Dorsolateral prefrontal cortex (tissue), 120 donors: ENCODE measurements at regions of chr19 and their contacts with region 1.

Region 1: DNA sequence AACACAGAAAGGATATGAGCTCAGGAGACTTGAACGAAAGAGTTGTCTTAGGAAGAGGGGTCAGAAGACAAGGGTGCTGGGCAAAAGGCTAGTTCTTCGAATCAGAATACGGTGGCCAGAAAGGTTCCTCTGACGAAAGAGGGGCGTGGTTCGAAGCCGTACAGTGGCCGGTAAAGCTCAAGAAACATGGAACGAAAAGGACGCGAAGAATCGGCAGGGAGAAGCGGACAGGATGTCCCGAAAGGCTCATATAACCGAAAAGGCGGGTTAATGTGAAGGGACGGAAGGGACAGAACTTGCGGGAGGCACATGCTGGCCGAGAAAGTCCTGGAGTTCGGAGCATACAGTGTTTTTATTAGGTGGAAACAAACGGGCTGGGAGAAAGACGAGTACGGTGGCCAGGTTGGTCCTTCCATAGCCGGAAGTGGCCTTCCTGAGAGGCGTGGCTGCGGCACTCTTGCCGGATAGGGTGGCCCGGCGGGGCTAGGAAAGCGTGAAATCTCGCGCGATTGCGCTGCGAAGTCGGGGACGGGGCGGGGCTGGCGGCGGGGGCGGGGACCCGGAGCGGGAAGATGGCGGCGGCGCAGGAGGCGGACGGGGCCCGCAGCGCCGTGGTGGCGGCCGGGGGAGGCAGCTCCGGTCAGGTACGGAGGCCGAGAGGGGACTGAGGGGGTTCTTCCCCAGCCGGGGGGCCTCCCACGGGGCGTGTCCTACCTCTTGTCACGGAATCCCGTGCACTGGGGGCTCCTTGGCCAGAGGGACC is at the start of gene CLPTM1:
- DNase-seq: peak; percentile 91 to 98 (median 95)
- H3K4me3 ChIP-seq: peak within 1 kb of the TSS; percentile 77 to 100 (median 98)
- H3K27ac ChIP-seq: peak within 1 kb of the TSS; percentile 88 to 100 (median 97)
- H3K27me3 ChIP-seq: no peaks in the 10 kb centered on the region
- CTCF ChIP-seq: peak in 13 of 56 donors; percentile 2 to 40 (median 17)
- total RNA-seq, gene CLPTM1: 131 to 199 (median 164) TPM

Region 2: GRCh38 chr19:44890366-44891015 is 64.5 kb before region 1 on chr19:
- intact Hi-C with region 1: loop called in 1 of 2 experiments (anchors 2 kb)
- DNase-seq: peak in 7 of 10 donors; percentile 99 to 100 (median 100)
- H3K4me3 ChIP-seq: peak overlapping the region; percentile 51 to 99 (median 74)
- H3K27ac ChIP-seq: peak overlapping the region; percentile 58 to 99 (median 93)
- H3K27me3 ChIP-seq: no peaks in the 10 kb centered on the region
- CTCF ChIP-seq: peak in 20 of 56 donors; percentile 7 to 42 (median 24)

Region 3: GRCh38 chr19:44903602-44904425 is 51.2 kb before region 1 on chr19:
- intact Hi-C with region 1: loop called in 1 of 2 experiments (anchors 2 kb)
- DNase-seq: peak; percentile 58 to 89 (median 78)
- H3K4me3 ChIP-seq: peak overlapping the region in 7 of 59 donors; percentile 2 to 33 (median 23)
- H3K27ac ChIP-seq: peak overlapping the region in 33 of 59 donors; percentile 8 to 78 (median 52)
- H3K27me3 ChIP-seq: peaks cover 0 to 25% (median 6%) of the 10 kb centered on the region in 45 donors
- CTCF ChIP-seq: peak; percentile 93 to 100 (median 98)

Region 4: DNA sequence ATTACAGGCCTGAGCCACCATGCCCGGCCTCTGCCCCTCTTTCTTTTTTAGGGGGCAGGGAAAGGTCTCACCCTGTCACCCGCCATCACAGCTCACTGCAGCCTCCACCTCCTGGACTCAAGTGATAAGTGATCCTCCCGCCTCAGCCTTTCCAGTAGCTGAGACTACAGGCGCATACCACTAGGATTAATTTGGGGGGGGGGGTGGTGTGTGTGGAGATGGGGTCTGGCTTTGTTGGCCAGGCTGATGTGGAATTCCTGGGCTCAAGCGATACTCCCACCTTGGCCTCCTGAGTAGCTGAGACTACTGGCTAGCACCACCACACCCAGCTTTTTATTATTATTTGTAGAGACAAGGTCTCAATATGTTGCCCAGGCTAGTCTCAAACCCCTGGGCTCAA is 45.2 kb before region 1 on chr19:
- intact Hi-C with region 1: loop called (anchors 2 kb)
- DNase-seq: no peak
- H3K4me3 ChIP-seq: no peak overlapping the region
- H3K27ac ChIP-seq: peak overlapping the region in 3 of 59 donors; percentile 34 to 45 (median 44)
- H3K27me3 ChIP-seq: peaks cover 0 to 25% (median 6%) of the 10 kb centered on the region in 45 donors
- CTCF ChIP-seq: no peak

Region 5: DNA sequence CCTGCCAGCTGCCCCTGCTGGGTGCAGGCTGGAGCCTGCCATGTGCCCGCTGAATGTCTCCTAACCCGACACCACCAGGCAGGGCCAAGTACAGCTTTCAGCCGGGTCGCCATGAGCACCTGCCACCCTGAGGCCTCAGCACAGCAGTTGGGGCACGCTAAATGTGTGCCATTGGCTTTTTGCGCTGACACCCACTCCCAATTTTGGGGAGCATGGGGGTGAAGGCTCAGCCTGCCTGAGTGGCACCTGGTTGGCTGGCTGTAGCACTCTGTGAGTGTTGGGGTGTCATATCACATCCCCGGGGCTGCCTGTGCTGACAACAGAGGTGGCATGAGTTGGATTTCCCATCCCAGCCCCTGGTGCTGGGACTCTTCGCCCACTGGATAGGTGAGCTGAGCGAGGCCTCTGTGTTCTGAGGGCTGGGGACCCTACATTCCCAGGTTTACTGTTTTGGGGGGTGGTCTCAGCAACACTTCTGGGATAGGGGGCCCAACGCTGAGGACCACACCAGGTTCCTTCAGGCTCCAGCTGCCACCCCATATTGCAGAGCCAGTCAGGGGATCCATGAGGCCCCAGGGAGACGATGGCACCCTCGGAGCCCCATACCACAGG is 39.0 kb after region 1 on chr19:
- intact Hi-C with region 1: loop called (anchors 2 kb)
- DNase-seq: no peak
- H3K4me3 ChIP-seq: no peak overlapping the region
- H3K27ac ChIP-seq: no peak overlapping the region
- H3K27me3 ChIP-seq: no peaks in the 10 kb centered on the region
- CTCF ChIP-seq: no peak

Region 6: DNA sequence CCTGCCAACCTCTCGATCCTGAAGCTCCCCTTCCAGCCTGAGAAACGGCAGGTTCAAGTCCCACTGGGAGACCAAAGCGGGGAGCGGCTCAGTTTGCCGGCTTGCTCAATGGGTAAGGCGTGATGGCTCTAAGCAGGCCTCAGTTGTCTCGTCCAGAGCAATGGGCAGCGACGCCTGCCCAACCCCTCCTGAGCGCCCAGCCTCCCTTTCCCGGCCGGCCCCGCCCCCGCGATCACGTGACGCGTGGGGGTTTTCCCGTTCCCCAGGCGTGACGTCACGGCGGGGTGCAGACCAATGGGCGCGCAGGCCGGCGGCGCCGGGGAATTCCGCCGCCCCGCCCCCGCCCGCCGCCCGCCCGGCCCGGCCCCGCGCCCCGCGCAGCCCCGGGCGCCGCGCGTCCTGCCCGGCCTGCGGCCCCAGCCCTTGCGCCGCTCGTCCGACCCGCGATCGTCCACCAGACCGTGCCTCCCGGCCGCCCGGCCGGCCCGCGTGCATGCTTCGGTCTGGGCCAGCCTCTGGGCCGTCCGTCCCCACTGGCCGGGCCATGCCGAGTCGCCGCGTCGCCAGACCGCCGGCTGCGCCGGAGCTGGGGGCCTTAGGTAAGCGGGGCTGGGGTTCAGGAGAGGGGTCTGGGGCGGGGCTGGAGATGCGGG is 46.2 kb after region 1 on chr19 and contains the start of gene RELB:
- intact Hi-C with region 1: loop called in 1 of 2 experiments (anchors 2 kb)
- DNase-seq: peak; percentile 83 to 94 (median 89)
- H3K4me3 ChIP-seq: peak within 1 kb of the TSS; percentile 39 to 82 (median 70)
- H3K27ac ChIP-seq: peak within 1 kb of the TSS; percentile 41 to 97 (median 88)
- H3K27me3 ChIP-seq: no peaks in the 10 kb centered on the region
- CTCF ChIP-seq: no peak
- total RNA-seq, gene RELB: 1.5 to 13.8 (median 4.1) TPM

Region 7: GRCh38 chr19:45187421-45188100 is 232.6 kb after region 1 on chr19:
- intact Hi-C with region 1: no loop called
- DNase-seq: peak in 1 of 10 donors; percentile 26
- H3K4me3 ChIP-seq: no peak overlapping the region
- H3K27ac ChIP-seq: no peak overlapping the region
- H3K27me3 ChIP-seq: no peaks in the 10 kb centered on the region
- CTCF ChIP-seq: peak in 54 of 56 donors; percentile 20 to 62 (median 45)

Region 8: DNA sequence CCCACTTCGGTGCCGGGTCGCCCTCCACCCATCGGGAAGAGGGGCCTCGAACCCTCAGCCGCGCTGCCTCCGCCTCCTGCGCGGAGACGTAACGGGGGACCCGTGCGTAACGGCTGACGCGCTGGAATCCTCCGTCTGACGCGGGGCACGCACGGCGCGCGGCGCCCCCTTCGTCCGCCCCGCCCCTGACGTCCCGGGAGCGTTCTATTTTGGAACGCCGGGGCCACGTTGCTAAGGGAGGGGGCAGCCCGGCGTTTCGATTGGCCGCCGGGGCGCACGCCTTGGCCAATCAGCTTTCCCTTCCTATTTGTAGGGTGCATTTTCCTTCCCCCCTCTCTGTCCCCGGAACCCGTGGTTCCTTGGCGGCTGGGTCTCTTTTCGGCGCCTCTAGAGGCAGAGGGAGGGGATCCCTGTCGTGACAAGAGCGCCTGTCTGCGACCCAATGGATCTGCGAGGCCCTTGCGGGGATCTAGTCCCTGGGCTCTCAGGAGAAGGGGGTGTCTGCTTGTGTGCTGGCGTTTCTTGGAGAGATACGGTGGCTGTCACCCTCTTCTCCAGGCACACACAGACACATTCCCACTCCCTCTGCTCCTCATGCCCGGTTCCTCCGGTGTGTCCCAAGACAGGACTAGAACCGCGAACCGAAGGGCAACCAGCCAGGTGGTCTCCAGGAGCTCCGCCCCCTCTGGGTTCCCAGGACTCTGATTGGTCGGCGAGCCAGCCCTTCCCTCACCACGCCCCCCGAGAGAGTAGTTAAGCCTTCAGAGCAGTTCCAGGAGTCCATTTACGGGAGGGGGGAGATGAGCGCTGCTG is 514.3 kb after region 1 on chr19:
- intact Hi-C with region 1: loop called in 1 of 2 experiments (anchors 5 kb)
- DNase-seq: peak; percentile 78 to 97 (median 92)
- H3K4me3 ChIP-seq: peak overlapping the region; percentile 46 to 97 (median 77)
- H3K27ac ChIP-seq: peak overlapping the region; percentile 31 to 98 (median 92)
- H3K27me3 ChIP-seq: peaks cover 0 to 9% (median 0%) of the 10 kb centered on the region in 45 donors
- CTCF ChIP-seq: peak in 24 of 56 donors; percentile 7 to 49 (median 22)